Panc1 (cell line): ENCODE measurements at regions of chr12 and their contacts with region 1.

Region 1: GRCh38 chr12:96906849-96907670 is at the start of gene NEDD1:
- DNase-seq: peak; percentile 15
- ATAC-seq: peak; percentile 99
- H3K4me3 ChIP-seq: peak within 1 kb of the TSS; percentile 97 to 98
- H3K27ac ChIP-seq: peak within 1 kb of the TSS; percentile 93
- H3K4me1 ChIP-seq: peaks cover 14% of the 10 kb centered on the region
- H3K27me3 ChIP-seq: no peaks in the 10 kb centered on the region
- CTCF ChIP-seq: no peak
- total RNA-seq, gene NEDD1: 30.3 TPM

Region 2: DNA sequence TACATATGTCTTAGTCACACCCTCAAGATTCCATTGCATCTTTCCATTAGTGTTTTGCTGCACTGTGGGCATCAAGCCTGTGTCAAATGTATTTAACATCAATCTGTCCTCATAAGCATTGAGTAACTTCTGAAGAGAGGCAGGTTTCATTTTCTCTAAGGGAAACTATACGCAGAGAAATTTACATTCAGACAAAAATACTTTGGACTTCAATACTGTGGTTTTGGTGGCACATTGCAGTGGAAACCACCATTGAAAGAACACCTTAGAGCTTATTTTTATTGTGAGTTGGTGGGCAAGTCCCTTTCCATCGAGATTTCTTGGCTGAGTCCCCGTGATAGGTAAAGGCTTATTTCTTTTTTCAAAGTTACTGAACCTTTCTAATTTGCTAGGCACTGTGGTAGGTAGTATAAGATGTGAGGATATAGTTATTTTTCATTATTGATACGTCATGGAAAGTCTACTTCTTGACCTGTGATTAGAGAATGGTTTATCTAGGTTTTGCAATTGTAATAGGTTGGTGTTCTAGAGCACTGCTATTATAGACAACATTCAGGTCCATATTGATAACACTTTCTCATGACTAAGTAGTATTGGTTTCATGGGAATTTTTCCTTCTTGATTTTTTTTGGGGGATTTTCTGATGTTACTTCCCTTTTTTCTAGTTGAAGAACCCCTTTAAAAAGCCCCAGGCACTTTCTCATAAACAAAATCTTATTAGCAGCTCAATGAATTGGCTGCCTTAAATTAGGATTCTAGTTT is 335.8 kb before region 1 on chr12:
- CTCF ChIA-PET with region 1: interaction called, 10 read pairs
- POLR2A ChIA-PET with region 1: no interaction called
- in situ Hi-C with region 1: no loop called
- intact Hi-C with region 1: no loop called
- DNase-seq: no peak
- ATAC-seq: no peak
- H3K4me3 ChIP-seq: no peak overlapping the region
- H3K27ac ChIP-seq: no peak overlapping the region
- H3K4me1 ChIP-seq: no peaks in the 10 kb centered on the region
- H3K27me3 ChIP-seq: peaks cover 5% of the 10 kb centered on the region; the same call in 1 of the 2 replicates
- CTCF ChIP-seq: no peak